ENCODE measurements at regions of chr12 and their contacts with region 1.

Region 1: DNA sequence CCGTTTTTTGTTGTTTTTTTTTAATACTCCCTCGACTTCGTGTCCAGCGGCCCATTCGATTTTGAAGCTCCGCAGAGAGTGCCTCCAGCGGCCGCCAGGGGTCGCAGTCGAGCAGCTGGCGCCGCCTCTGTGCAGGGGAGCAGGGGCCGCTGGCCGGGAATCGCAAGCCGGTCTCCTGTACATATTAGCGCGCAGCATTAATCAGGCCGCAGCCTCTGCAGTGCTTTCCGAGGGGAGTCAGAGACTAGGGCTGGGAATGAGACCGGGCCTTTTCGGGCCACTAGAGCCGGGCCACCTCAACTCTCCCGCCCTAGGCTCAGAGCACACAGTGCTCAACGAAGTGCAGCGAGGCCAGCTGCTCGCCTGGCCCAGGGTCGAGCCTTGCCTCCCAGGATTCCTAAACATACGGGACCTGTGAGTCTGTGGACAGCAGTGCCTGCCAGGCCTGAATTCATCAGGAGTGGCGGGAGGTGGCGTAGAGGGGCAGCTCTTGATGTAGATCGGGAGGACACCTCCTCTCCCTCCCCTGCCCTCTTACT is 81.8 kb downstream of the EMP1 start:
- DNase-seq: peak; percentile 45
- H3K4me3 ChIP-seq: no peak overlapping the region
- H3K27ac ChIP-seq: no peak overlapping the region
- H3K4me1 ChIP-seq: no peaks in the 10 kb centered on the region
- H3K27me3 ChIP-seq: peaks cover 2% of the 10 kb centered on the region
- CTCF ChIP-seq: peak; percentile 61 to 96

Region 2: GRCh38 chr12:13135371-13136178 is 142.7 kb before region 1 on chr12:
- CTCF ChIA-PET with region 1: no interaction called
- dilution Hi-C with region 1: no loop called
- in situ Hi-C with region 1: no loop called
- intact Hi-C with region 1: no loop called
- DNase-seq: peak; percentile 96
- H3K4me3 ChIP-seq: peak overlapping the region in 2 of 3 experiments; percentile 8 to 24
- H3K27ac ChIP-seq: peak overlapping the region; percentile 80
- H3K4me1 ChIP-seq: peaks cover 45% of the 10 kb centered on the region
- H3K27me3 ChIP-seq: no peaks in the 10 kb centered on the region
- CTCF ChIP-seq: peak in 1 of 2 donors; percentile 42

Region 3: DNA sequence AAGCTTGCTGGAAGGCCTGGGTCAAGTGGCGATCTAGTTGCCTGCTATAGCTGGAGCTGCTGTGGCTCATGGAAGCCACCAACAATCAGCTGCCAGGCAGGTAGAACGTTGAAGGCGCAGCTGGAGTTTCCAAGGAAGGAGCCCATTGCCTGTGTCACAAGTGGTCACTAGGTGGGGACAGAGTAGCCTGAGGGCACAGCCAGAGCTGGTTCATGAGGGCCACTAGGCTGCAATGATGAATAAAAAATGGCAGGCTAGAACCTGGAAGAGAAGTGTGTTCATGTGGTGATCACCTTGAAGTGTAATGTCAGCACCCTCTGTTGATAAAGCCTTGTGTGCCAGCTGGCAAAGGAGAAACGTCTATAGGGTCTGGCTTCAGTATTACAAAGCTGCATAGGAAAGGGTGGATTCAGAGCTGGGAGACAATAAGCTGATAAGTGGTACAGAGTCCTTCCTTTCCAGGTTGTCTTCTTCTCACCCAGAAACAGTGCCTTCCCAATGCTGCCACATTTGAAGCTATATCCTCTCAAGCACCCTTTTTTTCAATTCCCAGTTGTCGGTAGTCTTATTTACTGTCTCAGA is 84.0 kb after region 1 on chr12:
- CTCF ChIA-PET with region 1: interaction called, 8 read pairs
- dilution Hi-C with region 1: no loop called
- in situ Hi-C with region 1: no loop called
- intact Hi-C with region 1: loop called (anchors 2 kb)
- DNase-seq: peak; percentile 62
- H3K4me3 ChIP-seq: no peak overlapping the region
- H3K27ac ChIP-seq: no peak overlapping the region
- H3K4me1 ChIP-seq: no peaks in the 10 kb centered on the region
- H3K27me3 ChIP-seq: peaks cover 3% of the 10 kb centered on the region
- CTCF ChIP-seq: peak; percentile 81 to 85

Region 4: DNA sequence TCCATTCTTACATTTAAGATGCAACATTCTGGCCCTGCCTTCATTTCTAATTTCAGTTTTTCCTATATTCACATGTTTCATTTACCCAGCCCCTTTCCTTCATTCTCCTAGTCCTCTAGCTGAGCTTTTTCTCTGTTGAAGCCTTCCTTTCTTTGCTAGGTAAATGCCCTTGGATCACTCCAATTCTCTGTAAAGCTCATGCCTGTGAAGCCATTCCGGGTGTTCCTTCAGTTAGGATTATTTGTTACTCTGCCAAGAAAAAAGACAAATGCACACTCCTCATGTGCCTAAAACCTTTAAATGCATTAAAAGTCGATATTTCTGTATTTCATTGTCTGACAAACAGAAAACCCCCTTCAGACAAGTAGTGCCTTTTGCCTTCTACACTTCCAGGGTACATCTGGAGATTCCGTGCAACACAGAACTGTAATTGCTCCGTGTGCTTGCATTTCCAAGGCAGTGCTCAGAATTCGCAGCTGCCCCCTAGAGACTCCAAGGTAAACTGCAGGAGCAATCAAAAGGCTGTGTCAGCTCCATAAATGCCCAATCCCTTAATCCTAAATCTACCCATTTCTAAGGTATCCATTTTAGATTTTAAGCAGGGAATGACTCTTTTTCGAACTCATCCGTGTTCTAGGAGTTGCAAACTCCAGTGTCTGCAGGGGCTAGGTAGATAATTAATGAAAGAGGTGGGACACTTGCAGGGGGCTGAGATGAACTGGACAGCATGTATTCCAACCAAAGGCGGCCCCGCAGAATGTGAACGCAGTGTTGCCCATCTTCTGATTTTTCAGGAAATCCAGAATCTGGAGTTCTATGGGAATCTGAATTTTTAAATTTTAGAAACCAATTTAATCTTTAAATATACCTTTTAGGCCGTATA is 382.9 kb after region 1 on chr12:
- CTCF ChIA-PET with region 1: no interaction called
- dilution Hi-C with region 1: no loop called
- in situ Hi-C with region 1: loop called in 1 of 2 experiments (anchors 25 kb)
- intact Hi-C with region 1: loop called (anchors 2 kb)
- DNase-seq: peak; percentile 30
- H3K4me3 ChIP-seq: no peak overlapping the region
- H3K27ac ChIP-seq: no peak overlapping the region
- H3K4me1 ChIP-seq: no peaks in the 10 kb centered on the region
- H3K27me3 ChIP-seq: no peaks in the 10 kb centered on the region
- CTCF ChIP-seq: peak; percentile 93 to 95

Region 5: DNA sequence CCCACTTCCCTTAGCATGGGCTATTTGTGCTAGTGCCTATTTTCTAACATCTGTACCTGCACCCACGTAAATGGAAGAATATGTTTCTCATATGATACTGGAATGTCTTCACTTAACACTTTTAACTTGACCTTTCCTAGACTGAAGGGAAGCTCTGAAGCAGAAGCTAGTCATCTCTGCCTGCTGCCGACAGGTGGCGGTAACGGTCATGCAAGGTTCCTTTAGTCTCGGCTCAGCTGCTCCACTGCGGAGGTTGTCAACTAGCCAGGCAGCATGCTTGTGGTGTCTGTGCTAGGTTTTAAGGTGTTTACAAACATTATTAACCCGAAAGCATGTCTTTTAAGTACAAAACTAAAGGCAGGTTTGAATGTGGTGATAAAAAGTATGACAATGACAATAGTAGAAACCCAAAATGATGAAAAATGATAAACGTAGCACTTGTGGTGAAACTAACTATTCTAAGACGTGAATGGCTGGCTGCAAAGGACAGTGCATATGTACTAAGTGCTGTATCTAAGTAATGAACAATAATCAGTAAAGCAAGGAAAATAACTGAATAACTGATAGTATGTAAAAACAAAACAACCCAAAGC is 585.9 kb after region 1 on chr12:
- CTCF ChIA-PET with region 1: no interaction called
- dilution Hi-C with region 1: no loop called
- in situ Hi-C with region 1: no loop called
- intact Hi-C with region 1: loop called (anchors 10 kb)
- DNase-seq: peak; percentile 47
- H3K4me3 ChIP-seq: no peak overlapping the region
- H3K27ac ChIP-seq: no peak overlapping the region
- H3K4me1 ChIP-seq: no peaks in the 10 kb centered on the region
- H3K27me3 ChIP-seq: peaks cover 3% of the 10 kb centered on the region
- CTCF ChIP-seq: peak; percentile 95 to 98

Region 6: DNA sequence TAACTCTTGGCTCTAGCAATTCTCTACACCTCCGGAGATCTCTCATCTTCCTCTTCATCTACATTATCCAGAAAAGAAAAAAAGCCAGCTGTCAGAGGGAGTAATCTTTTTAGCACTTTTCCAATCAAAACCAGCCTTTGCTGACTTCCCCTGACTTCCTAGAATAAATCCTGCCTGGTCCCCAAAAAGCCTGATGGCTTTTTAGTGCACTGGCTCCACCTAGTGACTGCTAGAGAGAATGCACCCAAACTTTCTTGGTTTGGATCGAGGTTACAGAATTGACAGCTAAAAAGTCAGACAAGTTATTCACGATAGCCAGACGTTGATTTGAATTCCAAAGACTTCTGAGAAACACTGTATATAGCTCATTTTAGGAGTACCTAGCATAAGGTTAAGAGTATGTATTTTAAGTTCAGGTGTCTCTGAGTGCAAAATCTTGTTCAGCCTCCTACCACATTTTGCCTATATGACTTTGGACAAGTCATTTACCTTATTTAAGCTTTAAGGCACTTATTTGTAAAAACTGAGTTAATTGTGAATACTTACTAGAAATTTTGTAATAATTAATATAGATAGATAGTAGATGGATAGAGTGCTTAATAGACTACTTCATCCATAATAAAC is 888.8 kb after region 1 on chr12:
- CTCF ChIA-PET with region 1: no interaction called
- dilution Hi-C with region 1: no loop called
- in situ Hi-C with region 1: loop called in 1 of 2 experiments (anchors 25 kb)
- intact Hi-C with region 1: loop called (anchors 2 kb)
- DNase-seq: peak; percentile 42
- H3K4me3 ChIP-seq: no peak overlapping the region
- H3K27ac ChIP-seq: no peak overlapping the region
- H3K4me1 ChIP-seq: no peaks in the 10 kb centered on the region
- H3K27me3 ChIP-seq: no peaks in the 10 kb centered on the region
- CTCF ChIP-seq: peak; percentile 96 to 99

Measured in mammary epithelial cell (primary cell).